Upper lobe of right lung (tissue), 1 donor: ENCODE measurements at regions of chr20 and their contacts with region 1.

Region 1: DNA sequence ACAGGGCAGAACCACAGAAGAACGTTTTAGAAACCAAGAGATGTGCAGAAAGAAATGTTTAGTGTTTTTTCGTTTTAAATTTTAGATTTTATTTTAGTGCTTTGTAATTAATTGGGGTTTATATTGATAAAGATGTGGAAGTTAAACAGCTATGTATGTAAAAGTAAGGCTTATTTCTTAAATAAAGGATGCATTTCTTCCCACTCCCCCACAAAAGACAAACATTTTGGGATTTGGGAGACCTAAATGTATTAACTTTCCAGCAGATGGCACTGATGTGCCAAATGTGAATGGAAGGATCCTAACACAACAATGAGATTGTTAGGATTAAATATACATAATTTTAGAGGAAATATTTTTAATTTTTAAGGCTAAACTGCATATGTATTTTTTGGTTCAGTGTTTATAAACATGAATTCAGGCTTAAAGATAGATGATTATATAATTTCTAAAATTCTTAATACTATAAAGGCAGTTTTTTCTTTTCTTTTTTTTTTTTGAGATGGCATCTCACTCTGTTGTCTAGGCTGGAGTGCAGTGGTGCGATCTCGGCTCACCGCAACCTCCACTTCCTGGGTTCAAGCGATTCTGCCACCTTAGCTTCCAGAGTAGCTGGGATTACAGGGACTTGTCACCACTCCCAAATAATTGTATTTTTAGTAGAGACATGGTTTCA is 12.0 kb downstream of the PFDN4 start:
- DNase-seq: no peak
- ATAC-seq: no peak
- H3K4me3 ChIP-seq: no peak overlapping the region
- H3K27ac ChIP-seq: no peak overlapping the region
- H3K4me1 ChIP-seq: no peaks in the 10 kb centered on the region
- H3K27me3 ChIP-seq: no peaks in the 10 kb centered on the region
- CTCF ChIP-seq: peak; percentile 37

Region 2: GRCh38 chr20:54649511-54649962 is 429.6 kb after region 1 on chr20:
- intact Hi-C with region 1: loop called (anchors 5 kb)
- DNase-seq: peak; percentile 76
- ATAC-seq: peak; percentile 87
- H3K4me3 ChIP-seq: no peak overlapping the region
- H3K27ac ChIP-seq: no peak overlapping the region
- H3K4me1 ChIP-seq: no peaks in the 10 kb centered on the region
- H3K27me3 ChIP-seq: peaks cover 5% of the 10 kb centered on the region
- CTCF ChIP-seq: peak; percentile 81